ENCODE measurements at regions of chr5 and their contacts with region 1.

Region 1: GRCh38 chr5:106241432-106241831 is 1429.3 kb downstream of the EFNA5 start:
- DNase-seq: no peak
- H3K4me3 Mint-ChIP-seq: no peak overlapping the region
- H3K27ac Mint-ChIP-seq: no peak overlapping the region
- H3K4me1 Mint-ChIP-seq: no peaks in the 10 kb centered on the region
- H3K27me3 Mint-ChIP-seq: no peaks in the 10 kb centered on the region

Region 2: DNA sequence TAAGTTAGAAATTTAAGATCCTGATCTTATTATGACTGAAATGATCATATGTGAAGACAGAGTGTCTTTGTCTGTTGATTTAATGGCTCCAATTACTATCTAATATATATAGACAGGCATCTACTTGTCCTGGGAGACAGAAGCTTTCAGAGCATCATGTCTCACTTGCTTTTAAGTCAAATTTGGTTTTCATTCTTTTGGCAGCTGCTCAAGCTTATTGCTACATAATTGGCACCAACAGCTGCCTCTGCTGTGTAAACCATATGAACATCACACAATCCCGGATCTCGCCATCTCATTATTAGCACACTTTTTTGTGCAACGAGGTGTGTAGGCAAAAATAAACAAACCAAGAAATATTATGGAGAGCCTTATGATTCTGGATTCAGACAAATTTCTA is 288.6 kb before region 1 on chr5:
- CTCF ChIA-PET with region 1: no interaction called
- POLR2A ChIA-PET with region 1: no interaction called
- intact Hi-C with region 1: no loop called
- DNase-seq: no peak
- H3K4me3 Mint-ChIP-seq: no peak overlapping the region
- H3K27ac Mint-ChIP-seq: no peak overlapping the region
- H3K4me1 Mint-ChIP-seq: no peaks in the 10 kb centered on the region
- H3K27me3 Mint-ChIP-seq: no peaks in the 10 kb centered on the region

Region 3: GRCh38 chr5:106171708-106172107 is 69.7 kb before region 1 on chr5:
- CTCF ChIA-PET with region 1: no interaction called
- POLR2A ChIA-PET with region 1: no interaction called
- intact Hi-C with region 1: no loop called
- DNase-seq: no peak
- H3K4me3 Mint-ChIP-seq: no peak overlapping the region
- H3K27ac Mint-ChIP-seq: no peak overlapping the region
- H3K4me1 Mint-ChIP-seq: no peaks in the 10 kb centered on the region
- H3K27me3 Mint-ChIP-seq: no peaks in the 10 kb centered on the region

Region 4: GRCh38 chr5:106288977-106289376 is 47.5 kb after region 1 on chr5:
- CTCF ChIA-PET with region 1: no interaction called
- POLR2A ChIA-PET with region 1: no interaction called
- intact Hi-C with region 1: loop called (anchors 1 kb)
- DNase-seq: no peak
- H3K4me3 Mint-ChIP-seq: no peak overlapping the region
- H3K27ac Mint-ChIP-seq: no peak overlapping the region
- H3K4me1 Mint-ChIP-seq: no peaks in the 10 kb centered on the region
- H3K27me3 Mint-ChIP-seq: no peaks in the 10 kb centered on the region

Region 5: GRCh38 chr5:106397700-106398099 is 156.3 kb after region 1 on chr5:
- CTCF ChIA-PET with region 1: no interaction called
- POLR2A ChIA-PET with region 1: no interaction called
- intact Hi-C with region 1: no loop called
- DNase-seq: no peak
- H3K4me3 Mint-ChIP-seq: no peak overlapping the region
- H3K27ac Mint-ChIP-seq: no peak overlapping the region
- H3K4me1 Mint-ChIP-seq: no peaks in the 10 kb centered on the region
- H3K27me3 Mint-ChIP-seq: no peaks in the 10 kb centered on the region

Region 6: GRCh38 chr5:106481374-106481773 is 239.9 kb after region 1 on chr5:
- CTCF ChIA-PET with region 1: no interaction called
- POLR2A ChIA-PET with region 1: no interaction called
- intact Hi-C with region 1: no loop called
- DNase-seq: no peak
- H3K4me3 Mint-ChIP-seq: no peak overlapping the region
- H3K27ac Mint-ChIP-seq: no peak overlapping the region
- H3K4me1 Mint-ChIP-seq: no peaks in the 10 kb centered on the region
- H3K27me3 Mint-ChIP-seq: no peaks in the 10 kb centered on the region

Measured in activated CD4-positive, alpha-beta memory T cell treated with anti-CD3 and anti-CD28 coated beads for 36 hours (primary cell).